Gastrocnemius medialis (tissue), 4 donors: ENCODE measurements at regions of chr2 and their contacts with region 1.

Region 1: GRCh38 chr2:238256594-238257104 is 16.8 kb upstream of the HES6 start:
- DNase-seq: peak; percentile 51 to 88
- ATAC-seq: peak; percentile 77 to 90
- H3K4me3 ChIP-seq: no peak overlapping the region
- H3K27ac ChIP-seq: peak overlapping the region in 1 of 4 donors; percentile 5
- H3K4me1 ChIP-seq: peaks cover 0 to 6% of the 10 kb centered on the region in 2 donors
- H3K27me3 ChIP-seq: no peaks in the 10 kb centered on the region
- CTCF ChIP-seq: peak; percentile 68 to 88 (median 77)
- POLR2A ChIP-seq: no peak

Region 2: GRCh38 chr2:237841051-237841450 is 415.6 kb before region 1 on chr2:
- in situ Hi-C with region 1: no loop called
- intact Hi-C with region 1: no loop called
- DNase-seq: no peak
- ATAC-seq: no peak
- H3K4me3 ChIP-seq: no peak overlapping the region
- H3K27ac ChIP-seq: no peak overlapping the region
- H3K4me1 ChIP-seq: no peaks in the 10 kb centered on the region
- H3K27me3 ChIP-seq: no peaks in the 10 kb centered on the region
- CTCF ChIP-seq: no peak
- POLR2A ChIP-seq: no peak

Region 3: GRCh38 chr2:238216651-238217184 is 39.9 kb before region 1 on chr2:
- in situ Hi-C with region 1: no loop called
- intact Hi-C with region 1: loop called (anchors 2 kb)
- DNase-seq: peak; percentile 64 to 75
- ATAC-seq: peak; percentile 86 to 93
- H3K4me3 ChIP-seq: no peak overlapping the region
- H3K27ac ChIP-seq: peak overlapping the region; percentile 67 to 84 (median 74)
- H3K4me1 ChIP-seq: peaks cover 19 to 23% of the 10 kb centered on the region in 2 donors
- H3K27me3 ChIP-seq: no peaks in the 10 kb centered on the region
- CTCF ChIP-seq: no peak
- POLR2A ChIP-seq: no peak

Region 4: DNA sequence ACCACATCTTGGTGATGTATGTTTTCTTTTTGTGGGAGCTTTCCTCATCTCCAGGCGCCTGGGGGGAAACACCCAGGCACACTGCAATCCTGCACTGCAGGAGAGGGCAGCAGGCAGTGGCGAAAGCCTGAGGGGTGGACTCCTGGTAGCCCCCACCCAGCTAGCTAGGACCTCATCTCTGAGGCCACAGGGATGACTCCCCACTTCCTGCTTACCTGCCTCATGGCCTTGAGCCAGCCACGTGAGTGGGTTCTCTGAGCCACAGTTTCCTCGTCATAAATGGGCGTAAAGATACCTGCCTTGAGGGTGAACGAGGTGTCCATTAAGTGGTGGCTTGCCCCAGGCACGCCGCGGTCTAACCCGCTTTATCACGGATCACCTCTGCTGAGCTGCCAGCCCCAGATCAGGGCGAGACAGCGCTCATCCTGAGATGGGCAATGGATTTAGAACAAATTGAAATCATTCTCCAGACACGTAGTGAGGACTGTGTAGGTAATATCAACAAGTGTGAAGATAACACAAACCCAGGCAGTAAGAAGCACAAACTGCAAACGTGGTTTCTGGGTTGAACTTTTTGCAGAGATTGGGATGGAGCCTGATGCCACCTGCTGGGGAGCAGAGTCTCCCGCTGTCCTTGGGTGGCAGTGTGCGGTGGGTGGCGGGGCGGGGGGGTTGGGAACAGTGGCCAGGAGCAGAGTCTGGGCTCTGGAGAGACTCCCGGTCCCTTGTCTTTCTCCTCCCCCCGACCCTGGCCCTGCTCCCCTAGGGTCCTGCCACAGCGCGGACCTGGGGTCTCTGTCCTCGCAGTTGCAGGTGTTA is 83.0 kb after region 1 on chr2:
- in situ Hi-C with region 1: no loop called
- intact Hi-C with region 1: loop called (anchors 2 kb)
- DNase-seq: no peak
- ATAC-seq: peak; percentile 60 to 78
- H3K4me3 ChIP-seq: no peak overlapping the region
- H3K27ac ChIP-seq: no peak overlapping the region
- H3K4me1 ChIP-seq: peaks cover 14 to 19% of the 10 kb centered on the region in 2 donors
- H3K27me3 ChIP-seq: no peaks in the 10 kb centered on the region
- CTCF ChIP-seq: peak in 4 of 5 experiments; percentile 16 to 55 (median 35)
- POLR2A ChIP-seq: no peak

Region 5: DNA sequence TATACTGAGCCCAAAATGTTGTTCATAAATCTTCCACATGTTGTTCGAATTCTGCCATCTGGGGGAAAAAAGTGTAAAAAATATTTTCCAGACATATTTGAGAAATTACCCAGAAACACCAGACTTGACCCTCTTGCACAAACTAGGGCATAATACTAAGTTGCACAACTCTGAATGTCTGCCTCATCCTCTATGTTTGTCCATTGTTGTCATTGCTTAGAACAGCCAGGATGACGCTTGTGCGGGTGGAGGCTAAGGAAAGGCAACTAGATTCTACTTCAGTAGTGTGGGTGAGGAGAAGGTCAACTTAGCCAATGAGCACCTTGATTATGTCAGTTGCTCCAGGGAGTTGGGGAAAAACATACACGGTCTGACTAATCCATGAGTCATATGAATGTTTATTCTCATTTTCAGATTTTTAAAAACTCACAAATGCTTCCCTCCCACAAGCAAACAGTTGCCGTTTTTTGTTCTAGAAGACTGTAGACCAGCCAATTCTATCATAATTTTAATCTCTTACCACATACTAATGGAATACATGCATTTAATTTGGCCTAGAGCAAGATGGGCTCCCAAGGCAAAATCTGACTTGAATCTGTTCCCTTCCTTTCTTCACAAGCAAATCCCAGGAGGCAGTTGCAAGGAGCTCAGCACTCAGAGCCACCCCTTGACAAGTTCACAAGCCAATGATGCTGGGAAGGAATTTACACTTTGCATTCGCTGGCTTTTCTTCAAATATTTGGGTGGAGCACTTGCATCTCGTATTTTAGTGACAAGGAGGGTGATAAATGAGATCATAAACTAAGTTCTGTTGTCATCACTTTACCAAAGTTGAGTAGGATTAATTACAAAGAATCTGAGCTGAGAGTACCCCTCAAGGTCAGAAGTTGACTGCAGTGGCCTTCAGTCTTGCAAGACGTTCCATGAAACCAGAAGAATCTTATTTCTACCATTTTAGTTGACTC is 428.0 kb after region 1 on chr2:
- in situ Hi-C with region 1: no loop called
- intact Hi-C with region 1: no loop called
- DNase-seq: peak; percentile 36 to 64
- ATAC-seq: peak; percentile 91
- H3K4me3 ChIP-seq: no peak overlapping the region
- H3K27ac ChIP-seq: peak overlapping the region; percentile 27 to 55 (median 46)
- H3K4me1 ChIP-seq: no peaks in the 10 kb centered on the region
- H3K27me3 ChIP-seq: peaks cover 0 to 2% (median 0%) of the 10 kb centered on the region in 3 donors
- CTCF ChIP-seq: no peak
- POLR2A ChIP-seq: no peak